Right cardiac atrium (tissue), 5 donors: ENCODE measurements at regions of chr9 and their contacts with region 1.

Region 1: DNA sequence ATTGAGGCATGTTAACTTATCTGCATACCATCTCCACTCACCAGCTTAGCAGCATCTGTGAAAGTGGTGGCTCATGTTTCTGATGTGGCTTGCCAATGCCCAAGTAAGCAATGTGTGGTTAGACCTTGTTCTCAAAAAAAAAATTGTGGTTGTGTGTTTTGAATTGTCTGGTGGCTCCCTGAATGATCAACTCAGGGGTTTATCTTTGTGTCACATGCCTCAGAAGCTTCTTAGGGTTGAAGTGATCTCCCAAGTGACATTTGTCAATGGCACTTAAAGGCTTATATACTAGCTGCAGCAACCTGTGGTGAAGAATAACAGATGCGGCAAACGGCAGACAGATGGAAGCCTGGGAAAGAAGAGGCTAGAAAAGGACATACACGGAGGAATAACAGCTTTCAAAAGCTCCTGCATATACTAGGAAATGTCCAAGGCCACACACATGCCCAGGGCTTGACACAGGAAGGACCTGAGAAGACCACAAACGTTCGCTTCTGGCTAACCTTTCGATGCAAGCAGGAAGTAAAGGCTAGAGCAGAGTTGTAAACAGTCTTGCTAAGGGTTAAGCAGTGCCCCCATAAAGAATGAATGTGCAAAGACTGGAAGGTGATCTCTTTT is 42.2 kb upstream of the FSD1L start:
- DNase-seq: no peak
- ATAC-seq: no peak
- H3K4me3 ChIP-seq: no peak overlapping the region
- H3K27ac ChIP-seq: no peak overlapping the region
- H3K4me1 ChIP-seq: no peaks in the 10 kb centered on the region
- H3K27me3 ChIP-seq: no peaks in the 10 kb centered on the region

Region 2: GRCh38 chr9:105168870-105169319 is 236.7 kb before region 1 on chr9:
- intact Hi-C with region 1: loop called in 1 of 4 experiments (anchors 10 kb)
- DNase-seq: no peak
- ATAC-seq: no peak
- H3K4me3 ChIP-seq: no peak overlapping the region
- H3K27ac ChIP-seq: no peak overlapping the region
- H3K4me1 ChIP-seq: no peaks in the 10 kb centered on the region
- H3K27me3 ChIP-seq: no peaks in the 10 kb centered on the region

Region 3: GRCh38 chr9:105554042-105554441 is 148.4 kb after region 1 on chr9:
- intact Hi-C with region 1: no loop called
- DNase-seq: peak; percentile 45 to 65 (median 65)
- ATAC-seq: peak in 1 of 2 donors; percentile 67
- H3K4me3 ChIP-seq: no peak overlapping the region
- H3K27ac ChIP-seq: no peak overlapping the region
- H3K4me1 ChIP-seq: no peaks in the 10 kb centered on the region
- H3K27me3 ChIP-seq: no peaks in the 10 kb centered on the region

Region 4: DNA sequence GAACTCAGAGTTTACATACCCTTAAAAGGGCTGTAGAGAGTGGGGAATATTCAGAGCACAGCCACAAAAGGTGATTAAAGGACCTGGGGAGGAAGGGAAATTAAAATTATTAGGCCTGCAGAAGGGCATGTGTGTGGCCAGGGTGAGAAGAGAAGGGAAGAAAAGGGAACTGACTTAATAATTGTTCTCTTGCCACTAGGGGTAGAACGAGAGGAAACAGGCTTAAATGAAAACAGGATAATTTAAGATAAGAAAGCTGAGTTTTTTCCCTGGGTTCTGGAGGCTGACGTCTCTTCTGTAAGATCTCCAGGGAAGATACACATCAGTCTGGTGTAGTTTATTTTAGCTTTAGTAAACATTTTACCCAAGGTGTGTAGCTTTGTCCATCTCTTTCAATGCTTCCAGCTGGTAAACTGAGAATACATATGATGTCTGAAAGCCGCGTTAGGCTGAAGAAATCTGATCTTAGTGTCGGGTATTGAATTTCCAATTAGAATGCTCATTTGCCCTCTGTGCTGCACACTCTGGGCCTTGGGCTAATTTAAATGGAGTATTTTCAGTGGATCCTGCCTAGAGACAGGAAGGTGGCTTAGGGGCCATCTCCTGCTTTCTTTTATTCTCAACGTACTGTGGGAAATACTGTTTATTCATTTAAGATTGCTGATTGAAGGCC is 705.6 kb after region 1 on chr9:
- intact Hi-C with region 1: no loop called
- DNase-seq: no peak
- ATAC-seq: no peak
- H3K4me3 ChIP-seq: no peak overlapping the region
- H3K27ac ChIP-seq: no peak overlapping the region
- H3K4me1 ChIP-seq: no peaks in the 10 kb centered on the region
- H3K27me3 ChIP-seq: no peaks in the 10 kb centered on the region